Activated CD4-positive, alpha-beta T cell treated with anti-CD3 and anti-CD28 coated beads, Interleukin-2, amount 10 ng/mL, durations not matched to agents 24 days and 14 days (primary cell): ENCODE measurements at regions of chr20 and their contacts with region 1.

Region 1: DNA sequence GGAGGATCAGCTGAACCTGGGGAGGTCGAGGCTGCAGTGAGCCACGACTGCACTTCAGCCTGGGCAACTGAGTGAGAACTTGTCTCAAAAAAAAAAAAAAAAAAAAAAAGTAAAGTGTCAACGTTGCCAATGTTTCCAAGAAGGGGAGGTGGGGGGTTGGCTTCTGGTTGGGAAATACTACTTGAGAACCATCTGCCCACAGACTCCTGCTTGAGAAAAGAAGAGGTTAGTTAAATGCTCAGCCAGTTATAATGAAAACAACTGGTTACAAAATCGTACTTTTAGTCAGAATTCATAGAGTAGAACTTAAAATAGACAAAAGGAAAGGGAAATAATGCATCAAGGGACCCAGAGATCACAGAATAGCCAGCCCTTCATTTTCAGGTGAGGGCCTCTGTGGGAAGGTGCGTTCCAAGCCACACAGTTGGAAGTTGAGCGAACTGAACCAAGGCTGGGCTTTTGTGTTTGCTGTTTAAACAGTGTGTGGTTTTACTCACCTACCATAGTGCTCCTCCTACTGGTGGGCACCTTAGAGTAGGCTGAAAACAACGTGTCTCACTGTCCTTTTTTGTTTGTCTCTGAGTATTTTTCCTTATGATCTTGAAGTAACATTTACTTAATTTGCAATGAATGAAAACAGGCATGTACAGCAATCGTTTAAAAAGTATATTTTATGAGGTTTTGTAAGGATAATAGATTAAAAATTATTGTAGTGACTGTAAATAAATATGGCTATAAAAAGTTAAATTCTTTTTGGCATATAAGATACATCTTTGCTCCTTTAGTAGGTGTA is 200.7 kb downstream of the BCAS1 start:
- DNase-seq: peak; percentile 92
- H3K4me3 Mint-ChIP-seq: peak overlapping the region; percentile 57
- H3K27ac Mint-ChIP-seq: peak overlapping the region; percentile 92
- H3K4me1 Mint-ChIP-seq: peaks cover 63% of the 10 kb centered on the region
- H3K27me3 Mint-ChIP-seq: no peaks in the 10 kb centered on the region

Region 2: DNA sequence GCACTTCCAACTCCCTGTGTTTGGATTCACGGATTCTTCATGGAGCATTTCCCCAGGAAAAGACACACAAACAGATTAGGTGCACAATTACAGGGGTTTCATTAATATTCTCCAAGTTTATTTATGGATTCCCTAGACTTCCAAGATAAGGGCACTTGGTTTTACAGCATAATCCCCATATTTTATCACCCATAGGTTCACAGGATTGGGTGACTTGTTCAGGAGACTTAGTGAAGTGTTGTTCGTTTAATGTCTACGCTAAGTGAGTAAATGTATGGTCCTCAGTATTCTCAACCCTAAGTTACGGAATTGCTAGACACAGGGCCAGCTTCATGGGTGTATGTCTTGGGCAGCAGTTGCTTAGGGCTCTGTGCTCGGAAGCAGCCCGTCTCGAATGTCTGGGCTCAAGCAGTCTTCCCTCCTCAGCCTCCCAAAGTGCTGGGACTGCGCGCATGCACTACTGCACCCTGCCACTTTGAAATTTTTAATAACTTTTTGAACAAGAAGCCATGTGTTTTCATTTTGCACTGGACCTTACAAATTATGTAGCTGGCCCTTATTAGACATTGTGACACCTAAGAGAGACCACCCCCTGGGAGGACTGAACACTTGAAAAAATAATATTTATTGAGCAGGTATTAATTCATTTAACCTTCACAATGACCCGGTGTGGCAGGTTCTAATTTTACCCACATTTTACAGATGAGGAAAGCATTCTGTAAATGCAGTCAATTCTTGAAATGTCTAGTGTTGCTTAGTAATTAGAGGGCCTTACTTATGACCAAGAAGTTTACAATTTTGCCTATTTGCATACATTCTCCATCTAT is 184.5 kb before region 1 on chr20:
- intact Hi-C with region 1: loop called (anchors 5 kb)
- DNase-seq: no peak
- H3K4me3 Mint-ChIP-seq: peak overlapping the region; percentile 61
- H3K27ac Mint-ChIP-seq: peak overlapping the region; percentile 86
- H3K4me1 Mint-ChIP-seq: peaks cover 25% of the 10 kb centered on the region
- H3K27me3 Mint-ChIP-seq: no peaks in the 10 kb centered on the region

Region 3: DNA sequence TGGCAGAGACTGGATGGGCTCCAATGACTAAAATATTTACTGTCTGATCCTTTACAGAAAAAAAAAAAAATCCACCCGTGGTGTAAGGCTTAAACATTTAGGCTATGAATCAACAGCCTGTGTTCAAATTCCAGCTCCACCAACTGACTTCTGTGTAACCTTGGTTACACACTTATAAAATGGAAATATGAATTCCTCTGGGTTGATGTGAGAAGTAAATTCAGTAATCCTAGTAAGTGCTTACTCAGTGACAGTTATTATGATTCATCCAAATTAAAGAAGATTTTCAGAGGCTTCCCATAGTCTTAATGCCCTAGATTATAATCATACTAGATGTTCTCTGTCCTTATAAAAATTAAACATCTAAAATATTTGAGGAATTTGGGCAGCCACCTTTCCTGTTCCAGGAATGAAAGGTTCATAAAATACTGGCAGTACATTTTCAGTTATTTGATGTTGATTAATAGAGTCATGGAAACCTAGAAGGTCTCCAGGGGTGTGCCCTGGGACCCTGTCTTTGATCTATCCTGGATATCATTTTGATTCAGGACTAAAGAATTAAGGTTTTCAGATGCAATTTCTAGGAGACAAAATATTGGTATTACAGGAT is 95.8 kb before region 1 on chr20:
- intact Hi-C with region 1: no loop called
- DNase-seq: no peak
- H3K4me3 Mint-ChIP-seq: no peak overlapping the region
- H3K27ac Mint-ChIP-seq: no peak overlapping the region
- H3K4me1 Mint-ChIP-seq: peaks cover 7% of the 10 kb centered on the region
- H3K27me3 Mint-ChIP-seq: no peaks in the 10 kb centered on the region

Region 4: GRCh38 chr20:53839423-53840176 is 30.1 kb before region 1 on chr20:
- intact Hi-C with region 1: loop called (anchors 2 kb)
- DNase-seq: peak; percentile 88
- H3K4me3 Mint-ChIP-seq: peak overlapping the region; percentile 85
- H3K27ac Mint-ChIP-seq: peak overlapping the region; percentile 98
- H3K4me1 Mint-ChIP-seq: peaks cover 58% of the 10 kb centered on the region
- H3K27me3 Mint-ChIP-seq: no peaks in the 10 kb centered on the region

Region 5: GRCh38 chr20:53891306-53891944 is 21.8 kb after region 1 on chr20:
- intact Hi-C with region 1: loop called (anchors 1 kb)
- DNase-seq: no peak
- H3K4me3 Mint-ChIP-seq: no peak overlapping the region
- H3K27ac Mint-ChIP-seq: no peak overlapping the region
- H3K4me1 Mint-ChIP-seq: peaks cover 43% of the 10 kb centered on the region
- H3K27me3 Mint-ChIP-seq: no peaks in the 10 kb centered on the region

Region 6: GRCh38 chr20:53915446-53916172 is 45.9 kb after region 1 on chr20:
- intact Hi-C with region 1: loop called (anchors 1 kb)
- DNase-seq: peak; percentile 97
- H3K4me3 Mint-ChIP-seq: peak overlapping the region; percentile 93
- H3K27ac Mint-ChIP-seq: peak overlapping the region; percentile 91
- H3K4me1 Mint-ChIP-seq: peaks cover 37% of the 10 kb centered on the region
- H3K27me3 Mint-ChIP-seq: no peaks in the 10 kb centered on the region